ENCODE measurements at regions of chr9 and their contacts with region 1.

Region 1: DNA sequence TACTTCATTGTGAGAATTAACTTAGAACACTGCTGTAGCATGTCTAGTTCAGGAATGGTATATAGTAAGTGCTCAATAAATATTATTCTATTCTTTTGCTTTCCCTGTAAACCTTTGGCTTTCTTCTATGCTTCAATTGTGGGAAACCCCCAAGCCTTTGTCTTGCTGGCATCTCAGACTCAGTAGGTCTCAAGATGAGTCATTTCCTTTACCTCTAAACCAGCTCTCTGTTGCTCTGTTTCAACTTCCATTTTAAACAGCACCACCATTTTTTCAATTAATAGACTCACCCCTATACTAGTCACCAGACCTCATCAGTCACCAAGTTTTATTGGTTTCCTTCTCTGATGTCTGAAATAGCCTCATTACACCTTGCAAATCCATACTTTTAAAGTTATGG is 43.5 kb downstream of the DMAC1 start:
- DNase-seq: peak; percentile 18
- H3K4me3 Mint-ChIP-seq: no peak overlapping the region
- H3K27ac Mint-ChIP-seq: peak overlapping the region; percentile 36
- H3K4me1 Mint-ChIP-seq: peaks cover 26% of the 10 kb centered on the region
- H3K27me3 Mint-ChIP-seq: no peaks in the 10 kb centered on the region

Region 2: DNA sequence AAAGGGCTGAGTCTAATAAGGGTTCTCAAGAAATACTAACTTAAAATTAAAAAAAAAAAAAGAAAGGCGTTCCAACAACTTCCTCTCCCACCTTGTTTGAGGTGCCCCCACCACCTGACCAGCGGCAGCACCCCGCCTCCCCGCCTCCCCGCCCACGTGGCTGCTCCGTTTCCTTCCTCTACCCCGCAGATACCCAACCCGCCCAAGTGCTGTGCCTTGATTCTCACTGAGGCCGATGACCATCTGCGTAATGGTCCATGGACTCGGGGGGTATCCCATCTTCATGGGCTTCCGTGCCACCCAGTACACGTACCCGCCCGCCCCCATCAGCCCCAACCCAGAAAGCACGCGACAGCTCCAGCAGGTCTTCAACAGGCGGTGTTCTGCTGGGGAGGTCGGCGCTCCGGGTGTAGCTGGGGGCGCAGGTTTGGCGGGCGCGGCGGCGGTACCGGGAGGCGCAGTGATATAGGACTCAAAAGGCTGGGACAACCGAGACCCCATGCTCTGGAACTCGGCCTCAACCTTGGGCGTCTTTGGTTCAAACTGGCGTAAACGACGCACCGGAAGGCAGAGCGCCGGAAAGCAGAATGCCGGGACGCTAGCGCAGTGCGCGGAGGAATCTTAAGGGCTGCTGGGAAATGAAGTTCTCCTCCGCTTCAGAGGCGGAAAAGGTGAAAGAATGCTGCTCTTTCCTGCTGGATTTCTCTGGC is 43.3 kb after region 1 on chr9 and contains the start of gene DMAC1:
- intact Hi-C with region 1: loop called (anchors 2 kb)
- DNase-seq: peak; percentile 70
- H3K4me3 Mint-ChIP-seq: peak within 1 kb of the TSS; percentile 90
- H3K27ac Mint-ChIP-seq: peak within 1 kb of the TSS; percentile 89
- H3K4me1 Mint-ChIP-seq: peaks cover 23% of the 10 kb centered on the region
- H3K27me3 Mint-ChIP-seq: no peaks in the 10 kb centered on the region
- total RNA-seq, gene DMAC1: 50.5 and 51.0 TPM in 2 replicates

Region 3: GRCh38 chr9:7811677-7812076 is 55.6 kb after region 1 on chr9:
- intact Hi-C with region 1: no loop called
- DNase-seq: no peak
- H3K4me3 Mint-ChIP-seq: no peak overlapping the region
- H3K27ac Mint-ChIP-seq: no peak overlapping the region
- H3K4me1 Mint-ChIP-seq: no peaks in the 10 kb centered on the region
- H3K27me3 Mint-ChIP-seq: peaks cover 11% of the 10 kb centered on the region

Measured in activated T-helper 2 cell treated with anti-CD3 and anti-CD28 coated beads, Interferon-gamma antibody, Interleukin-2, Interleukin-4, amounts not matched to agents 10 μg/mL and 5 μg/mL and 100 μg/mL, durations not matched to agents 14 hours and 24 hours and 36 hours (primary cell).